ENCODE measurements at regions of chr15 and their contacts with region 1.

Region 1: DNA sequence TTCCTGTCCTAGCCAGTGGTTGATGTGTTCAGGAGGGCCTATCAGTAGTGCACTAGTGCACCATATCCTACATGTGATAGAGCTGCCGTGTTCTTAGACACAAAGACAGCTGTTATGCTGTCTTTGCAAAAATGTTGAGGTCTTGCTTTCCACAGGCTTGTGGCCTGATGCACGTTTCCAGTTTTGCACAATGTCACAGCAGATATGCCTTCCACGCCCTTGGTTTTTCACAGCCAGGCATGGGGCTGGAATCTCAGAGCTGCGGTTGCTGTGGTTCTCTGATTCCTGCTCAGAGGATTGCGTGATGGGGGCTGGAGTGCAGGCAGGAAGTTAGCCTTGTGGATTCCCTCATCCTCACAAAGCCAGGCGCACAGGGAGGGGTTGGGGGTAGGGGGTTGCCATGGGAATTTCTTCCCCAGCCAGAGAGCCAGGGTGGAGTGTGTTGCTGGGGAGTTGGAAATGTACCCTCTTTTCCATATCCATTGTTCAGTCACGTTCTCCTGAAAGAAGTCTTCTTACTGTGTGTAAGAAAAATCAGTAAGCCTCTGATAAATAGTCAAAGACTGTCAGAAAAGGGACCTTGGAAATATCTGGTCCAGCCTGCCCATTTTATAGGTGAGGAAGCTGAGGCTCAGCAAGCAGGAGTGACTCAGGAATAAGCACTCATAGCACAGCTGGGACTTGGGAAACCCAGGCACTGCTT is 79.4 kb downstream of the SMAD3 start:
- DNase-seq: peak; percentile 53
- ATAC-seq: no peak

Region 2: GRCh38 chr15:67622110-67622509 is 477.4 kb after region 1 on chr15:
- intact Hi-C with region 1: loop called (anchors 5 kb)
- DNase-seq: no peak
- ATAC-seq: no peak